Caco-2 (cell line): ENCODE measurements at regions of chr1 and their contacts with region 1.

Region 1: GRCh38 chr1:79603843-79604242 is 597.3 kb upstream of the ADGRL4 start:
- DNase-seq: peak; percentile 52 to 71
- H3K4me3 ChIP-seq: no peak overlapping the region
- H3K4me3 Mint-ChIP-seq: peak overlapping the region; percentile 23
- H3K27ac Mint-ChIP-seq: peak overlapping the region; percentile 65
- H3K4me1 ChIP-seq: peaks cover 23% of the 10 kb centered on the region
- H3K4me1 Mint-ChIP-seq: peaks cover 25% of the 10 kb centered on the region
- H3K27me3 ChIP-seq: no peaks in the 10 kb centered on the region
- H3K27me3 Mint-ChIP-seq: no peaks in the 10 kb centered on the region
- CTCF ChIP-seq: no peak

Region 2: DNA sequence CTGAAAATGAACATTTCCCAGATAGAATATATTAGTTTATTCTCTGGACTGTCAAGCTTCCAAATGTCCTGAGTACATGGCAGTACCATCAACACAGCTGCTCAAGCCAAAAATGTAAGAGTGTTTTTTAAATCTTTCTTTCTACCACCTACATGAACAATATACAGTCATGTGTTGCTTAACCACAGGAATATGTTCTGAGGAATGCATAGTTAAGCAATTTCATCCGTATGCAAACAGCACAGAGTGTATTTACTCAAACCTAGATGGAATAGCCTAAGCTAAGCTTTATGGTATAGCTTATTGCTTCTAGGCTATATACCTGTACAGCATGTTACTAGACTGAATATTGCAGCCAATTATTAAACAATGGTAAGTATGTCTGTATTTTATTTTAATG is 35.4 kb before region 1 on chr1:
- CTCF ChIA-PET with region 1: no interaction called
- POLR2A ChIA-PET with region 1: no interaction called
- intact Hi-C with region 1: loop called (anchors 5 kb)
- DNase-seq: peak in 1 of 2 experiments; percentile 32
- H3K4me3 ChIP-seq: no peak overlapping the region
- H3K4me3 Mint-ChIP-seq: no peak overlapping the region
- H3K27ac Mint-ChIP-seq: peak overlapping the region; percentile 44
- H3K4me1 ChIP-seq: peaks cover 12% of the 10 kb centered on the region; the same call in 1 of the 2 replicates
- H3K4me1 Mint-ChIP-seq: peaks cover 8% of the 10 kb centered on the region
- H3K27me3 ChIP-seq: no peaks in the 10 kb centered on the region
- H3K27me3 Mint-ChIP-seq: no peaks in the 10 kb centered on the region
- CTCF ChIP-seq: no peak

Region 3: GRCh38 chr1:79617777-79618176 is 13.9 kb after region 1 on chr1:
- CTCF ChIA-PET with region 1: no interaction called
- POLR2A ChIA-PET with region 1: no interaction called
- intact Hi-C with region 1: no loop called
- DNase-seq: no peak
- H3K4me3 ChIP-seq: no peak overlapping the region
- H3K4me3 Mint-ChIP-seq: no peak overlapping the region
- H3K27ac Mint-ChIP-seq: no peak overlapping the region
- H3K4me1 ChIP-seq: no peaks in the 10 kb centered on the region
- H3K4me1 Mint-ChIP-seq: peaks cover 7% of the 10 kb centered on the region
- H3K27me3 ChIP-seq: no peaks in the 10 kb centered on the region
- H3K27me3 Mint-ChIP-seq: no peaks in the 10 kb centered on the region
- CTCF ChIP-seq: peak in 1 of 2 experiments; percentile 14

Region 4: GRCh38 chr1:79638382-79638781 is 34.5 kb after region 1 on chr1:
- CTCF ChIA-PET with region 1: no interaction called
- POLR2A ChIA-PET with region 1: no interaction called
- intact Hi-C with region 1: loop called (anchors 2 kb)
- DNase-seq: no peak
- H3K4me3 ChIP-seq: no peak overlapping the region
- H3K4me3 Mint-ChIP-seq: no peak overlapping the region
- H3K27ac Mint-ChIP-seq: no peak overlapping the region
- H3K4me1 ChIP-seq: no peaks in the 10 kb centered on the region
- H3K4me1 Mint-ChIP-seq: peaks cover 6% of the 10 kb centered on the region
- H3K27me3 ChIP-seq: no peaks in the 10 kb centered on the region
- H3K27me3 Mint-ChIP-seq: no peaks in the 10 kb centered on the region
- CTCF ChIP-seq: no peak